ENCODE measurements at regions of chr17 and their contacts with region 1.

Region 1: DNA sequence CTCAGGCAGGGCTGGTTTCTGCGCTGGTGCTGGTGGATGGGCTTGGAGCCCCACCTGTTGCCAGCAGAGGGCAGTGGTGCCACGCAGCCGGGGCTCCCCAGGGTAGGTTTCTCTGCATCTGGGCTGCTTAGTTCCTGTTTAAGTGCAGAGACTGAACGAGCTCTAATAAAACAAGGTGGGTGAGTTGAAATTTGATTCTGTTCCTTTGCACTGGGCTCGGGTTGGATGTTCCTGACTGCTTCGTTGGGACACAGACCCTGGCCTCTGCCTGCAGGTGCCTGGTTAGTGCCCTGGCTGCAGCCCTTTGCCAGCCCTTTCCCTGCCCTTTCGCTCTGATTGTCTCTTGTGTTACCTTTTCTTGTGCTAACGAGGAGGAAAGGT is 30.0 kb downstream of the TBCD start:
- DNase-seq: peak; percentile 75 to 83
- H3K4me3 ChIP-seq: no peak overlapping the region
- H3K27ac ChIP-seq: peak overlapping the region in 1 of 2 donors; percentile 19
- H3K4me1 ChIP-seq: no peaks in the 10 kb centered on the region
- H3K27me3 ChIP-seq: no peaks in the 10 kb centered on the region
- CTCF ChIP-seq: peak; percentile 95 to 98 (median 96)
- POLR2A ChIP-seq: no peak

Region 2: DNA sequence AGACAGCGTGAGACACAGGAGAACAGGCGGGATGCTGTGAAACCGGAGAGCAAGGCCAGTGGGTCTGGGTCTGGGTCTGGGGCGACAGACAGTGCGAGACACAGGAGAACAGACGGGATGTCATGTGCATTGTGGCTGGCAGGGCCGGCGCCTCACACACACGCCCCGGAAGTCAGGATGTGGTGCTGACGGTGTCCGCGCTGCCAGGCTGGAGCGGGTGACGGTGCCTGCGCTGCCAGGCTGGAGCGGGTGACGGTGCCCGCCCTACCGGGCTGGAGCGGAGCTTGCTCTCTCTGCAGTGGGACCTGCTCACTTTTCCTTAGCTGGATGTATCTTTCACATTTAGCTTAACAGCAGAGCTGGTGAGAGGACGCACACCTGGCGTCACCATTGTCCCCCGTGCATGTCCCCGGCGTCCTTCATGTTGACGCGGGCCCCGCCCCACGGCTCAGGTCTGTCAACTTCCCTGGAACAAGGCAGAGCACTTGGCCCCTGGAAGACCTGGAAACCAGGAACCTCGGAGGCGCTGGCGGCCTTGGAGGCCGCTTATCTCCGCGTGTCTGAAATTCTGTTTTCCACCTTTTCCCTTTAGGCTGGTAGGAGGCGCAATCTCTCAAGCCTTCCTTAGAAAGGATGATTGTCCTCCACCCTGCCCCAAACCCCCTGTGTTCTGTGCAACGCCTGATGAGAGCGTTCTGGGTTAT is 101.0 kb after region 1 on chr17:
- intact Hi-C with region 1: loop called (anchors 10 kb)
- DNase-seq: no peak
- H3K4me3 ChIP-seq: no peak overlapping the region
- H3K27ac ChIP-seq: peak overlapping the region in 1 of 2 donors; percentile 36
- H3K4me1 ChIP-seq: no peaks in the 10 kb centered on the region
- H3K27me3 ChIP-seq: no peaks in the 10 kb centered on the region
- CTCF ChIP-seq: no peak
- POLR2A ChIP-seq: no peak

Region 3: GRCh38 chr17:82956726-82957463 is 175.0 kb after region 1 on chr17:
- intact Hi-C with region 1: no loop called
- DNase-seq: no peak
- H3K4me3 ChIP-seq: no peak overlapping the region
- H3K27ac ChIP-seq: no peak overlapping the region
- H3K4me1 ChIP-seq: no peaks in the 10 kb centered on the region
- H3K27me3 ChIP-seq: no peaks in the 10 kb centered on the region
- CTCF ChIP-seq: no peak
- POLR2A ChIP-seq: no peak